ENCODE measurements at regions of chr6 and their contacts with region 1.

Region 1: DNA sequence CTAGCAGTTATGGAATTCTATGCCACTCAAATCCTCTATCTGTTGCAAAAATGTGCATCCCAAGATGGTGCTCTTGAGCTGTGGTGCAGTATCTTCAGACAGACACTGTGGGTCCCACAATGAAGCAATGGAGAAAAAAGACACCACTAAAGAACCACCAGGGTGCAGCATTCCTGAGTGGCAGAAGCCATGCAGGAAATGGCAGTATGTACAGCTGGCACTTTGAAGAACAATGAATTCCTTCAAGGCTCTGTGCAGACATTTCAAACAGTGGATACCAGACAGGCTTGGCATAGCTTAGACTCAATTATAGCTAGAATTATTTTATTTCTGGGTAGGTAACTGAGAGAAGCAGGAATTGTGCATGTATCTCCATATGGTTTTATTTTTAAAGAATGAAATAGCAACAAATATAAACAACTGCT is 24.0 kb upstream of the HDAC2 start:
- DNase-seq: peak; percentile 43
- H3K4me3 Mint-ChIP-seq: no peak overlapping the region
- H3K27ac Mint-ChIP-seq: no peak overlapping the region
- H3K4me1 Mint-ChIP-seq: no peaks in the 10 kb centered on the region
- H3K27me3 Mint-ChIP-seq: peaks cover 17% of the 10 kb centered on the region

Region 2: GRCh38 chr6:114033606-114034005 is 38.7 kb after region 1 on chr6:
- CTCF ChIA-PET with region 1: no interaction called
- POLR2A ChIA-PET with region 1: no interaction called
- DNase-seq: no peak
- H3K4me3 Mint-ChIP-seq: no peak overlapping the region
- H3K27ac Mint-ChIP-seq: no peak overlapping the region
- H3K4me1 Mint-ChIP-seq: no peaks in the 10 kb centered on the region
- H3K27me3 Mint-ChIP-seq: peaks cover 4% of the 10 kb centered on the region

Region 3: DNA sequence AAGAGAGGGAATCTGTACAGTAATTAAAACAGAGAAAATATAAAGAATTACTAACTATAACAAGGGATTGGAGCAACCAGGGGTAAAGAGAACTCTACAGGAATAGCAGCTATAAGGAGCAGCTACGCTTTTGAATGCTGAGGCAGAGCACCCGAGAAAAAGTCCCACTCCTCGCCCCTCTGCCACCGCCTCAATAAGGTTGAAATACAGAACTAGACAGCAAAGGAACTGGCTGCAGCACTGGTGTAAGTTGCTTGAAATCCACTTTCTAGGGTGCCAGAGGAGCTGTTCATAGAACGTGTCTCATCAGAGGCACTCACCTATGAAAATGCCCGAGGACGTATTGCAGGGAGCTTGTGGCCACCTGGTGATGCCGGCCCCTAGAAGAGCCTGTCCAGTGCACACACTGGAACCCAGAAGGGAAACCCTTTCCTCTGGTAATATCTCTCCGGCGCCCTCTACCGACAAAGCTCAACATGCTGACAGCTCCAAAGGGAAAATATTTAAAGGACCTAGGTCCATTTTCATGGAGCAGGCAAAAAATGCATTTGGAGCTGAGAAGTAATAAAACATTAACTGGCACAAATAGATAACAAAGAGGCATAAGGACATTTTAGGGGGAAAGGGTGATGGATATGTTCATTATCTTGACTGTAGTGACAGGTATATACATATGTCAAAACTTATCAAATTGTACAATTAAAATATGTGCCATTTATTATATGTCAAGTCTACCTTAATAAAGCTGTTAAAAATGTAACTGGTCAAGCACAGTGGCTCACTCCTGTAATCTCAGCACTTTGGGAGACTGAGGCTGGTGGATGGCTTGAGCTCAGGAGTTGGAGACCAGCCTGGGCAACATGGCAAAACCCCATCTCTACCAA is 113.4 kb after region 1 on chr6:
- CTCF ChIA-PET with region 1: interaction called, 30 read pairs
- POLR2A ChIA-PET with region 1: no interaction called
- DNase-seq: peak; percentile 42
- H3K4me3 Mint-ChIP-seq: no peak overlapping the region
- H3K27ac Mint-ChIP-seq: no peak overlapping the region
- H3K4me1 Mint-ChIP-seq: no peaks in the 10 kb centered on the region
- H3K27me3 Mint-ChIP-seq: peaks cover 11% of the 10 kb centered on the region

Measured in activated CD4-positive, alpha-beta memory T cell treated with anti-CD3 and anti-CD28 coated beads, Interleukin-2, amount 10 ng/mL, durations not matched to agents 7 days and 5 days (primary cell).